Heart left ventricle (tissue), 16 donors: ENCODE measurements at regions of chr12 and their contacts with region 1.

Region 1: GRCh38 chr12:27014085-27014858 is at the start of gene TM7SF3:
- DNase-seq: peak; percentile 93 to 97 (median 94)
- ATAC-seq: peak; percentile 86 to 97 (median 96)
- H3K4me3 ChIP-seq: peak within 1 kb of the TSS; percentile 61 to 97 (median 86)
- H3K27ac ChIP-seq: peak within 1 kb of the TSS; percentile 77 to 97 (median 91)
- H3K4me1 ChIP-seq: peaks cover 0 to 56% (median 32%) of the 10 kb centered on the region in 12 donors
- H3K27me3 ChIP-seq: no peaks in the 10 kb centered on the region
- CTCF ChIP-seq: peak; percentile 93 to 100 (median 97)
- POLR2A ChIP-seq: peak in 1 of 2 donors; percentile 79
- total RNA-seq, gene TM7SF3: 13.8 to 84.0 (median 28.3) TPM

Region 2: DNA sequence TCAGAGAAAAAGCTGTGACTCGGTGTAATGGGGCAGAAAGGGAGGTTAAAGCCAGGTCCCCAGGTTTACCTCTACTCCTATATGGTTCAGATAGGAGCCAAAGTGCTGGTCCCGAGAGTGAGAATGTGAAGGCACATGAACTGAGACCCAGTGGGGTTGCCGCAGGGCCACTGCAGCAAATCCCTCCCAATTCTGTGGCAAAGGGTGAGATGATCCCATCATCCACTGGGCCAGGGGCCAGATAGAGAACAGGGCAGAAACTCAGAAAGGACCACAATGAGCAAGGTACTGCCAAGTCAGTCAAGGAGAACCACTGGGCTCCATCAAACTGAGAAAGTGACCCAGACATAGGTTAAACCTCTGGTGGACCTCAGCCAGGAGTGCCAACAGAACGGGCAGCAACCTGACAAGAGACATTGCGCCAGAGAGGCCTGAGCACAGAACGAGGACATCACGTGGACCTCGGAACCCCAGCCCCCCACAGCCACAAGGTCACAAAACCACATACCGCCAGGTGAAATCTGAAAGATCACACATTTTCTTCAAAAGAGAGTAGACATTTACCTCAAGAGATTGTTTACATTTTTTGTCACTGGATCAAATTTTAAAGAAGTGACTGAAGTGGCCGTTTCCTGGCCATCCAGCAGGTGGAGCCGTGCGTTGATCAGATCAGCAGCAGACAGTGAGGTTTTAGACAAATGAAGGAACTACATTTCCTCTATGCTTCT is 160.8 kb before region 1 on chr12:
- intact Hi-C with region 1: loop called in 7 of 10 experiments (anchors 5 to 10 kb)
- DNase-seq: peak; percentile 54 to 73 (median 66)
- ATAC-seq: peak; percentile 76 to 84 (median 81)
- H3K4me3 ChIP-seq: no peak overlapping the region
- H3K27ac ChIP-seq: no peak overlapping the region
- H3K4me1 ChIP-seq: peaks cover 0 to 15% (median 4%) of the 10 kb centered on the region in 12 donors
- H3K27me3 ChIP-seq: no peaks in the 10 kb centered on the region
- CTCF ChIP-seq: peak; percentile 76 to 96 (median 86)
- POLR2A ChIP-seq: no peak

Region 3: GRCh38 chr12:26937875-26938700 is 76.2 kb before region 1 on chr12 and contains the starts of genes FGFR1OP2 and INTS13:
- intact Hi-C with region 1: loop called in 9 of 10 experiments (anchors 1 to 5 kb)
- DNase-seq: peak; percentile 99 to 100 (median 99)
- ATAC-seq: peak; percentile 97 to 99 (median 98)
- H3K4me3 ChIP-seq: peak within 1 kb of the TSS; percentile 70 to 97 (median 88)
- H3K27ac ChIP-seq: peak within 1 kb of the TSS; percentile 94 to 98 (median 97)
- H3K4me1 ChIP-seq: peaks cover 3 to 69% (median 39%) of the 10 kb centered on the region in 12 donors
- H3K27me3 ChIP-seq: no peaks in the 10 kb centered on the region
- CTCF ChIP-seq: no peak
- POLR2A ChIP-seq: peak; percentile 77 to 98
- total RNA-seq, gene FGFR1OP2: 26.3 to 54.9 (median 30.8) TPM
- total RNA-seq, gene INTS13: 14.1 to 24.1 (median 18.5) TPM

Region 4: GRCh38 chr12:26971963-26972362 is 42.3 kb before region 1 on chr12:
- intact Hi-C with region 1: no loop called
- DNase-seq: no peak
- ATAC-seq: no peak
- H3K4me3 ChIP-seq: no peak overlapping the region
- H3K27ac ChIP-seq: no peak overlapping the region
- H3K4me1 ChIP-seq: peaks cover 0 to 10% (median 0%) of the 10 kb centered on the region in 12 donors
- H3K27me3 ChIP-seq: no peaks in the 10 kb centered on the region
- CTCF ChIP-seq: no peak
- POLR2A ChIP-seq: no peak

Region 5: GRCh38 chr12:27083861-27084394 is 69.7 kb after region 1 on chr12:
- intact Hi-C with region 1: no loop called
- DNase-seq: peak in 1 of 5 donors; percentile 20
- ATAC-seq: peak in 1 of 4 donors; percentile 53
- H3K4me3 ChIP-seq: peak overlapping the region in 3 of 12 donors; percentile 12 to 29 (median 28)
- H3K27ac ChIP-seq: no peak overlapping the region
- H3K4me1 ChIP-seq: peaks cover 0 to 2% (median 0%) of the 10 kb centered on the region in 12 donors
- H3K27me3 ChIP-seq: no peaks in the 10 kb centered on the region
- CTCF ChIP-seq: no peak
- POLR2A ChIP-seq: no peak

Region 6: GRCh38 chr12:27142101-27142721 is 127.9 kb after region 1 on chr12:
- intact Hi-C with region 1: loop called in 2 of 10 experiments (anchors 10 kb)
- DNase-seq: peak in 4 of 5 donors; percentile 47 to 74 (median 64)
- ATAC-seq: peak; percentile 78 to 96 (median 94)
- H3K4me3 ChIP-seq: no peak overlapping the region
- H3K27ac ChIP-seq: peak overlapping the region in 2 of 12 donors; percentile 6 to 15
- H3K4me1 ChIP-seq: peaks cover 0 to 17% (median 3%) of the 10 kb centered on the region in 12 donors
- H3K27me3 ChIP-seq: no peaks in the 10 kb centered on the region
- CTCF ChIP-seq: peak; percentile 65 to 93 (median 80)
- POLR2A ChIP-seq: no peak

Region 7: GRCh38 chr12:27293463-27293862 is 279.2 kb after region 1 on chr12:
- intact Hi-C with region 1: loop called in 1 of 10 experiments (anchors 5 kb)
- DNase-seq: peak in 2 of 5 donors; percentile 53
- ATAC-seq: peak in 1 of 4 donors; percentile 73
- H3K4me3 ChIP-seq: no peak overlapping the region
- H3K27ac ChIP-seq: peak overlapping the region in 9 of 12 donors; percentile 55 to 76 (median 70)
- H3K4me1 ChIP-seq: peaks cover 2 to 97% (median 63%) of the 10 kb centered on the region in 12 donors
- H3K27me3 ChIP-seq: no peaks in the 10 kb centered on the region
- CTCF ChIP-seq: no peak
- POLR2A ChIP-seq: no peak

Region 8: DNA sequence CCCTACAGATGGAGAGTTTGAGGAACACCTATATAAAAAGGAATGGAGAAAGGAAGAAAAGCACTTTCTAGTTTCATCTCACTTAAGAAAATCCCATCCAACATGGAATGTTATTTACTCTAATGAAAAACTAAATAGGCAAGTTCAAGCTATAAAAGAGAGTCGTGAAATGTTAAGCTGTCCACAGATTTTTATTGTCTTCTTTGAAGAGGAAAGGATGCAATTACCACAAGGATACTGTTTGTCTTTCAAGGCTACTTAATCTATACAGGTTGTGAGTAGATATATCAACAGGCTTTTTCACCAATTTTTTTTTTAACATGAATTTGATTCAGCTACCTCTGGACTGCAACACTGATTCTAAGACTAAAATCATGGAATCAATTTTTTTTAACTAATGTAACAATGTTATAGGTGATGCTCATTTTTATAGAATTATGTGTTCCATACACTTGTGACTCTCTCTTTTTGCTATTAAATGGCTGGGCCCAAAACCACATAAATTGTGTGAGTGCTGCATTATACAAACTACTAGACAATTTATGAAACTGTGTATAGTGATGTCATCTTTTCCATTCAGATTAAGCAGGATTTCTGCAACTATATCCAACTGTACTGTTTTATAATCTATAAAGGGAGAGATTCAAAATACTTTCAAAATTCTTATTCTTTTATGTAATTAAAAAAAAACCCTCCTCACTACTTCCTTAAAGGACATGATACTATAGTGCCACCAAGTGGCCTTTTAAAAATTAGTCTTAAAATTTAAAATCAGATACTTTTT is 291.6 kb after region 1 on chr12:
- intact Hi-C with region 1: loop called in 6 of 10 experiments (anchors 2 to 5 kb)
- DNase-seq: no peak
- ATAC-seq: peak in 2 of 4 donors; percentile 29 to 43
- H3K4me3 ChIP-seq: no peak overlapping the region
- H3K27ac ChIP-seq: peak overlapping the region in 6 of 12 donors; percentile 5 to 60 (median 42)
- H3K4me1 ChIP-seq: peaks cover 0 to 24% (median 5%) of the 10 kb centered on the region in 12 donors
- H3K27me3 ChIP-seq: no peaks in the 10 kb centered on the region
- CTCF ChIP-seq: peak; percentile 50 to 80 (median 67)
- POLR2A ChIP-seq: no peak

Region 9: GRCh38 chr12:27703710-27704452 is 689.6 kb after region 1 on chr12:
- intact Hi-C with region 1: loop called in 1 of 10 experiments (anchors 10 kb)
- DNase-seq: peak in 4 of 5 donors; percentile 43 to 62 (median 60)
- ATAC-seq: peak; percentile 69 to 88 (median 82)
- H3K4me3 ChIP-seq: no peak overlapping the region
- H3K27ac ChIP-seq: no peak overlapping the region
- H3K4me1 ChIP-seq: peaks cover 0 to 2% (median 0%) of the 10 kb centered on the region in 12 donors
- H3K27me3 ChIP-seq: no peaks in the 10 kb centered on the region
- CTCF ChIP-seq: peak; percentile 70 to 89 (median 82)
- POLR2A ChIP-seq: no peak